ENCODE measurements at regions of chr1 and their contacts with region 1.

Region 1: GRCh38 chr1:110412576-110412975 is 5.1 kb upstream of the LAMTOR5 start:
- DNase-seq: peak; percentile 74
- H3K4me3 Mint-ChIP-seq: no peak overlapping the region
- H3K27ac Mint-ChIP-seq: no peak overlapping the region
- H3K4me1 Mint-ChIP-seq: peaks cover 9% of the 10 kb centered on the region
- H3K27me3 Mint-ChIP-seq: no peaks in the 10 kb centered on the region

Region 2: DNA sequence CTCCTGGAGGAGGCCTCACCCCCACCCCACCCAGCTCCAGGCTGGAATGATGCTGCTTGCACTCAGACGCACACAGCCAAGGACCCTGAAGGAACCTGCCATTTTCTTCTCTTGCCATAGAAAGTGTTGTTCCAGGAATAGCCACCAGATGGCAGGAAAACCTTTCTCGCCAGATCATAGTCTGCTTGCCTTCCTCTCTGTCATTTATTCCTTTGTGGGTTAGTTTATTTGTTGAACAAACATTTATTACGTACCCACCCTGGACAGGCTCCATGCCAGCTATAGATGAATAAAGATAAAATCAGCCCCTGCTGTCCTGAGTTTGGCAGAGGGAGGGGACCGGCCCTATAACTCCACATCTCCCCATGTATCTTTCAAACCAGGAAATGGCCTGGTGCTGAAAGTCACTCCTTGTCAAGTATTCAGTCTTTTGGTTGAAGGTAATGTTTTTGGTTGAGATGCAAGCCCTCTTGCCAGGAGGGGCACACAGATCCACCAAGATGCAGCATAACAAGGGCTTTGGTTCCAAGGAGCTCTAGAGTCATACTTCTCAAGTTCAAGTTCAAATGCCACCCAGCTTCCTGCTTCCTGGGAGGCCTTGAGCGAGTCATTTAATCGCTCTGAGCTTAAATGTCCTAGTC is 209.4 kb before region 1 on chr1:
- CTCF ChIA-PET with region 1: interaction called, 19 read pairs
- POLR2A ChIA-PET with region 1: no interaction called
- intact Hi-C with region 1: no loop called
- DNase-seq: peak; percentile 73
- H3K4me3 Mint-ChIP-seq: no peak overlapping the region
- H3K27ac Mint-ChIP-seq: peak overlapping the region; percentile 83
- H3K4me1 Mint-ChIP-seq: peaks cover 15% of the 10 kb centered on the region
- H3K27me3 Mint-ChIP-seq: no peaks in the 10 kb centered on the region

Region 3: GRCh38 chr1:110229348-110230001 is 183.1 kb before region 1 on chr1:
- CTCF ChIA-PET with region 1: no interaction called
- POLR2A ChIA-PET with region 1: no interaction called
- intact Hi-C with region 1: no loop called
- DNase-seq: no peak
- H3K4me3 Mint-ChIP-seq: no peak overlapping the region
- H3K27ac Mint-ChIP-seq: no peak overlapping the region
- H3K4me1 Mint-ChIP-seq: peaks cover 3% of the 10 kb centered on the region
- H3K27me3 Mint-ChIP-seq: no peaks in the 10 kb centered on the region

Region 4: GRCh38 chr1:110433803-110434202 is 21.2 kb after region 1 on chr1:
- CTCF ChIA-PET with region 1: interaction called, 15 read pairs
- POLR2A ChIA-PET with region 1: no interaction called
- intact Hi-C with region 1: no loop called
- DNase-seq: peak; percentile 11
- H3K4me3 Mint-ChIP-seq: no peak overlapping the region
- H3K27ac Mint-ChIP-seq: no peak overlapping the region
- H3K4me1 Mint-ChIP-seq: no peaks in the 10 kb centered on the region
- H3K27me3 Mint-ChIP-seq: peaks cover 1% of the 10 kb centered on the region

Region 5: GRCh38 chr1:110455151-110455550 is 42.6 kb after region 1 on chr1:
- CTCF ChIA-PET with region 1: interaction called, 152 read pairs
- POLR2A ChIA-PET with region 1: interaction called, 7 read pairs
- intact Hi-C with region 1: loop called (anchors 1 kb)
- DNase-seq: no peak
- H3K4me3 Mint-ChIP-seq: no peak overlapping the region
- H3K27ac Mint-ChIP-seq: no peak overlapping the region
- H3K4me1 Mint-ChIP-seq: no peaks in the 10 kb centered on the region
- H3K27me3 Mint-ChIP-seq: peaks cover 6% of the 10 kb centered on the region

Measured in activated CD4-positive, alpha-beta memory T cell treated with anti-CD3 and anti-CD28 coated beads for 36 hours (primary cell).